Heart left ventricle (tissue), 16 donors: ENCODE measurements at regions of chr1 and their contacts with region 1.

Region 1: GRCh38 chr1:109667452-109668122 is at the start of gene GSTM2:
- DNase-seq: peak; percentile 94 to 97 (median 96)
- ATAC-seq: peak; percentile 99 to 100 (median 100)
- H3K4me3 ChIP-seq: peak within 1 kb of the TSS; percentile 31 to 73 (median 62)
- H3K27ac ChIP-seq: peak within 1 kb of the TSS in 9 of 12 donors; percentile 13 to 68 (median 54)
- H3K4me1 ChIP-seq: peaks cover 0 to 15% (median 7%) of the 10 kb centered on the region in 12 donors
- H3K27me3 ChIP-seq: no peaks in the 10 kb centered on the region
- CTCF ChIP-seq: no peak
- POLR2A ChIP-seq: peak in 1 of 2 donors; percentile 60
- total RNA-seq, gene GSTM2: 41.8 to 86.2 (median 62.3) TPM

Region 2: DNA sequence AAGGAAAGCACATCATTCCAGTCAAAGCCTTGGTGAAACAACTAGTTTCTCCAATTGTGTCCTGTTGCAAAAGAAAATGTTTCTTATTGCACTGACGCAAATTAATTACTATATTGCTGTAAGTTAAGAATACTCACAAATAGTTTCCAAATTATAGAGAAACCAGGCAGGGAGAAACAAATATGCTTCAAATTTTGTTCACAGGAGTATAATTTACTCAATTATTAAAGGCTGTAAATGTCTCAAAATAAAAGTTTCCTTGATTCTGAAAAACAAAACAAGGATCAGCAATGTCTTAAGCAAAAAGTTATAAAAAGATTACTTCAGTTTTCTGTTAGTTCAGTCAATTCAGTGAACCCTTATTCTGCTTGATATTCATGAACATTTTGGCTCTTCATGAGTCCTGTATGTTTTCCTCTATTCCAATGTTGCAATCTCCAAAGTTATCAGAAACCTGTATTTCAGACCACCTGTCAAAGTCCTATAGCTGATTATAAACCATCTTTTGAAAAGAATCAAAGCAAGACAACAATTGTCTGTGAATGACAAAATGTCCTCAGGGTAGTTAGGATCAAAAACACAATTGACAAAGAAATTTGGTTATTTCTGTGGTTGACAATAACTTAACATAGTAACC is 213.0 kb before region 1 on chr1:
- intact Hi-C with region 1: no loop called
- DNase-seq: no peak
- ATAC-seq: no peak
- H3K4me3 ChIP-seq: no peak overlapping the region
- H3K27ac ChIP-seq: no peak overlapping the region
- H3K4me1 ChIP-seq: no peaks in the 10 kb centered on the region
- H3K27me3 ChIP-seq: peaks cover 0 to 9% (median 0%) of the 10 kb centered on the region in 9 donors
- CTCF ChIP-seq: no peak
- POLR2A ChIP-seq: no peak

Region 3: DNA sequence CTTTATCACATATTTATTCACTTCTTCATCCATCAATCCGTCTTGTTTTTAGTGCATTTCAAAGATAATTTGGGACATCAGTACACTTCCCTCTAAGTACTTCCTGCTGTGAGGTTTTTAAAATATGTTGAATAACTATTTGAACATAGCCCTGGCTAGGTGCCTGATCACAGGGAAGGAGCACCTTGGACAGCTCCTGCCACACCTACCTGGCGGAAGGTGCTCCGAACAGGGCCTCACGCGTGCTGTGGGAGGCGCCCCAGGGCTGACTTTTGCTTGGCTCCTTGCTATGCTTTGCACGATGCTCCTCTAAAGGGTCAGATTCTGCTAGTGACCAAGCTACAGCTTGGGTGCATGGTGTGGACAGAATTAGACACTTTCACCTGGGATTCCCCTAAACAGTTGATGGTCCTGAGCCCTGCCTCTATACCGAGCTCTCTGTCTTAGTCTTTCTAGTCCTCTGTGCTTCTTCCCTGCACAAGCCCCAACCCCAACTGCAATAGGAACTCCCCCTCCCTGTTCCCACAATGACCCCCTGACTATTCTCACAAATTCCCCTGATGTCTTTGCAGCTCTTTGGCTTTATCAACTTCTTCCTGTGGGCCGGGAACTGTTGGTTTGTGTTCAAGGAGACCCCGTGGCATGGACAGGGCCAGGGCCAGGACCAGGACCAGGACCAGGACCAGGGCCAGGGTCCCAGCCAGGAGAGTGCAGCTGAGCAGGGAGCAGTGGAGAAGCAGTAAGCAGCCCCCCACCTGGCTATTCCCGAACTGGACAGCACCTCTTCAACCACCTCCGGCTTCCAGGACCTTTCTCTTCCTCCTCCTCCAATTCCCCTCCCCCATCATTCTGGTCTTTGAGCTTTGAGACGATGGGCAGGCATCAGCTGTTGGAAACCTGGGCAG is 188.5 kb before region 1 on chr1:
- intact Hi-C with region 1: no loop called
- DNase-seq: peak in 1 of 5 donors; percentile 16
- ATAC-seq: no peak
- H3K4me3 ChIP-seq: no peak overlapping the region
- H3K27ac ChIP-seq: no peak overlapping the region
- H3K4me1 ChIP-seq: peaks cover 0 to 19% (median 7%) of the 10 kb centered on the region in 12 donors
- H3K27me3 ChIP-seq: peaks cover 0 to 3% (median 0%) of the 10 kb centered on the region in 9 donors
- CTCF ChIP-seq: no peak
- POLR2A ChIP-seq: no peak

Region 4: GRCh38 chr1:109718491-109718890 is 50.9 kb after region 1 on chr1:
- intact Hi-C with region 1: loop called in 1 of 10 experiments (anchors 10 kb)
- DNase-seq: no peak
- ATAC-seq: peak in 3 of 4 donors; percentile 64 to 69 (median 67)
- H3K4me3 ChIP-seq: no peak overlapping the region
- H3K27ac ChIP-seq: no peak overlapping the region
- H3K4me1 ChIP-seq: peaks cover 0 to 8% (median 0%) of the 10 kb centered on the region in 12 donors
- H3K27me3 ChIP-seq: no peaks in the 10 kb centered on the region
- CTCF ChIP-seq: peak in 9 of 12 donors; percentile 4 to 43 (median 36)
- POLR2A ChIP-seq: no peak

Region 5: GRCh38 chr1:109751531-109752260 is 84.1 kb after region 1 on chr1:
- intact Hi-C with region 1: loop called in 1 of 10 experiments (anchors 5 kb)
- DNase-seq: no peak
- ATAC-seq: peak in 1 of 4 donors; percentile 19
- H3K4me3 ChIP-seq: no peak overlapping the region
- H3K27ac ChIP-seq: no peak overlapping the region
- H3K4me1 ChIP-seq: peaks cover 0 to 14% (median 3%) of the 10 kb centered on the region in 12 donors
- H3K27me3 ChIP-seq: no peaks in the 10 kb centered on the region
- CTCF ChIP-seq: no peak
- POLR2A ChIP-seq: no peak

Region 6: DNA sequence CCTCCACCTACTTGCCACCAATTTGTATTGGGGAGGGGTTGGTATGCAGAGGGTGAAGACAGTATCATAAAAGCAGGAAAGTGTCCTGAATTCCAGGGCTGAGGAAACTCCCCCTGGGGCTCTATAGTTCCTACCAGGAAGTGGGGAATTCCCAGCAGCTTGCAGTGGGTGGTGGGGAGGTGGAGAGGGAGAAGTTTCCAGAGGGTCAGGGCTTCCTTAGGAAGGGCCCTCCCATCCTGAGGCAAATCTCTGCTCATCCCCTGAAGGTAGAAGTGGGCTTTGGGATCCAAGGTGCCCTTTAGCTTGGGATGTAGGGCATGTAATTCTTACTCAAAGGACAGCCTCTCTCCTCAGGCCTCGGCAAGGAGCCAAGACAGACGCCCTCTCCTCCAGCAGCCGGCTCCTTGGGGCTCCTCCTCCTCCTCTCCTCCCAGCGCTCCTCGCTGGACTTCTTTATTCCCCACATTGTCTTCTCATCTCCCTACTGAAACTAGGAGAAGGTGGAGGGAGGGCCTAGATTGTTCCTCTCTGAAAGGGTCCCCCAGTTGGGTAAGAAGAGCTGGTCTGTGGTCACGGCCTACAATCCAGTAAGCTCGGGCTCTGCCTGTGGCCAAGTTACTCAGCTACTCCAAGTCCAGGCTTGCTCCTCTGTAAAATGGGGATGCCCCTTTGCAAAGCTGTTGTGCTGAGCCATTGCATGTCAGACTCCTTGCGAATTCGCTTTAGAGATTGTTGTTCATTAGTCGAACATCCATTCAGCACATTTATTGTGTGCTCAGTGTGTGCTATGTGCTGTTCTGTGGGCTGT is 225.2 kb after region 1 on chr1:
- intact Hi-C with region 1: no loop called
- DNase-seq: peak in 3 of 5 donors; percentile 47 to 53 (median 51)
- ATAC-seq: peak in 2 of 4 donors; percentile 33 to 67
- H3K4me3 ChIP-seq: no peak overlapping the region
- H3K27ac ChIP-seq: peak overlapping the region in 8 of 12 donors; percentile 11 to 74 (median 46)
- H3K4me1 ChIP-seq: peaks cover 0 to 74% (median 52%) of the 10 kb centered on the region in 12 donors
- H3K27me3 ChIP-seq: no peaks in the 10 kb centered on the region
- CTCF ChIP-seq: no peak
- POLR2A ChIP-seq: no peak